ENCODE measurements at regions of chr21 and their contacts with region 1.

Region 1: DNA sequence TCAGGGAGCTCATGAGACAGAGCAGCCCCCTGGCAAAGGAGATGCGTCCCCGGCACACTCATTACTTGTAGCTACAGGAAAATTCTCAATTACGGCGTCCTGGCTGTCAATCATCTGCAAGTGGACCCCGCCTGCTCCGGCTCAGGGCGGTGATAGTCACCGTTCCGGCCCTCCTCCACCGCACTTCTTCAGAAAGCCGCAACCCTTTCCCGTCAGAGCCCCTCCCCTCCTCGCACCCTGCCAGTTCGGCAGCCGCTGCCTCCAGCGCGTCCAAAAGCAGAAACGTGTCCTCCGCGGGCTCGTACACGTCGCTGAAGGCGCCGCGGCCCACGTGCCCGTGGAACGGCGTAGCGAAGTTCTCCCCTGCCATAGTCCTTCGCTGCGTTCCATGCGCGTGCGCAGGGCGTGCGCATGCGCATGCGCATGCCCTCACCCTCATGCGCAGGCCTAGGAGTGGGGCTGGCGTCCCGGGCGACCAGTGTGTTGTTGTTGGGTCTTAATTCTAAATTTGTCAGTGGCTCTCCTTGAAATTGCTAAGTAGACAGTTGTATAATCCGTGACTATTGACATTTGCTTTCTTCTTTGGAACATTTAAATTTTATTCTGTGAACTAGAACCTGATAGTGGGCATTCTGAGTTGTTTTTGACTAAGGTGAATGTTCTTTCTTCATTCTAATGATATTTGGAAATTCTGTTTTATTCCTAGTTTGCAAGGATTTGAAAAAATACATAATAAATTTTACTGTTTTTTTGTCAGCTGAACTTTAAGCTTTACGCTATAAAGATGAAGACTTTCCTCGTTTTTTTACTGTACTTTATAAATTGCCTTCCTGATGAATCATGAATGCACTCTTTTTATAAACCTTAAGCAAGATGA is 107.5 kb downstream of the LTN1 start:
- DNase-seq: peak; percentile 95
- H3K4me3 ChIP-seq: peak overlapping the region; percentile 47 to 57 (median 54)
- H3K27ac ChIP-seq: peak overlapping the region; percentile 83 to 90 (median 88)
- H3K4me1 ChIP-seq: peaks cover 0 to 12% (median 8%) of the 10 kb centered on the region in 4 donors
- H3K27me3 ChIP-seq: no peaks in the 10 kb centered on the region
- CTCF ChIP-seq: no peak
- EP300 ChIP-seq: peak in 1 of 4 donors; percentile 29
- POLR2A ChIP-seq: peak in 1 of 2 donors; percentile 33

Region 2: DNA sequence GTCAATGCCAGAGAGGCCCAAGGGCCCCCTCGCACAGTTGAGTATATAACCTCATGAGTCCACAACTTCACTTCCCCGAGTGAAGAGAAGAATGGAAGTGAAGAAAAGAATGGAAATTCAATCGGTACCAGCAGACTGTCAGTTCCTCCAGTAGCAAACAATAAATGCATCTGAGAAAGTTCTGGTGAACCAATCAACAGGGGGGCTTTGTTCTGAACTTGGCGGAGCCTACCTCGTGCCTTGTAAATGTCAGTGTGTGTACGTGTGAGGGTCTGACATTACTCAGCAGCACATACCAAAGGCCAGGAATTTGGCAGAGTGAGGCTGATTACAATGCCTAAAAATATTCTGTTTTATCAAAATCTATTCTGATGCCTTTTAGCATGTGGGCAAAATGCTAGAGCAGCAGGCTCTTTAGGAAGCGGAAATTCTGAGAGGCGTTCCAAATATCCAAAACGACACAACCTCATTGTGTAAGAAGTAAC is 131.0 kb before region 1 on chr21:
- intact Hi-C with region 1: loop called (anchors 5 kb)
- DNase-seq: peak; percentile 82
- H3K4me3 ChIP-seq: peak overlapping the region in 2 of 4 donors; percentile 13 to 17
- H3K27ac ChIP-seq: peak overlapping the region; percentile 76 to 89 (median 80)
- H3K4me1 ChIP-seq: peaks cover 0 to 53% (median 42%) of the 10 kb centered on the region in 4 donors
- H3K27me3 ChIP-seq: no peaks in the 10 kb centered on the region
- CTCF ChIP-seq: no peak
- EP300 ChIP-seq: peak; percentile 47 to 97 (median 78)
- POLR2A ChIP-seq: no peak

Region 3: DNA sequence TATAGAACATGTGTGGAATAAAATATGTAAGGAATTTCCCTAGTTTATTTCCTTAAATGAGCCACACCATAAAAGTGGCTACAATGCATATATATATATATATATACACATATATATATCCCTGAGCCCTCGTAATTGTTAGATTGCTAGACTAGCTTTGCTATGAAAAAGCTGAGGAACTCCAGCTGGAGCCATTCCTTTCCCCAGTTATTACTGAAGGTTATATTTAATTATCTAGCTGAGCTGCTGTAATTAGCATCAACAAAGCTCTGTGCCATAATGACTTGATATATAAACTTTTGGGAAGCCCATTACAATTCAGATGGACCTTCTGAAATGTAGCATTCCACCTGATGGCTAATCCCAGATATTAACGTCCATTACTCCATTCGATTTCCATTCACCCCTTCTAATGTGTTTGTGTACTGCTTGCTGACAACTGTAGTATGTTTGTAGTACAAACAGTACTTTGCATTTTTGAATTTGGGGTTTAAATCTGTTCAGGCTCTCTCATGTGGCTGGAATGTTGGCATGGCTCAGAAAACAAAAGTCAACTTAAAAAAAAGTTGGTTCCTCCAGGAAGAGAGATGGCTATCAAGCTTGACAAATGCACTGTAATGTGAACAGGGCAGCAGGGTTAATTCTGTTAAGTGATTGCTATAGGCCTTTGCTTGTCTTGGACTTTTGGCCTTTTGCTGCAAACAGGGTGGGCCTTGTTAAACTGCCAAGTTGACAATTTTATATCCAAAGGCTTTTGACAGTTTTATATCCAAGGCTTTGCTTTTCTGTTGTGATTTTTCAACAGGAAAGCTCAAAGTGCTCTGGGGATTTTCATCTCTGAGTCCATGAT is 62.5 kb before region 1 on chr21:
- intact Hi-C with region 1: loop called (anchors 5 kb)
- DNase-seq: no peak
- H3K4me3 ChIP-seq: no peak overlapping the region
- H3K27ac ChIP-seq: peak overlapping the region; percentile 17 to 81 (median 66)
- H3K4me1 ChIP-seq: peaks cover 0 to 31% (median 25%) of the 10 kb centered on the region in 4 donors
- H3K27me3 ChIP-seq: no peaks in the 10 kb centered on the region
- CTCF ChIP-seq: no peak
- EP300 ChIP-seq: no peak
- POLR2A ChIP-seq: no peak

Region 4: GRCh38 chr21:28943631-28944030 is 58.4 kb after region 1 on chr21:
- intact Hi-C with region 1: loop called (anchors 10 kb)
- DNase-seq: no peak
- H3K4me3 ChIP-seq: no peak overlapping the region
- H3K27ac ChIP-seq: no peak overlapping the region
- H3K4me1 ChIP-seq: peaks cover 0 to 5% (median 0%) of the 10 kb centered on the region in 4 donors
- H3K27me3 ChIP-seq: no peaks in the 10 kb centered on the region
- CTCF ChIP-seq: no peak
- EP300 ChIP-seq: no peak
- POLR2A ChIP-seq: no peak

Region 5: GRCh38 chr21:28975397-28975796 is 90.2 kb after region 1 on chr21:
- intact Hi-C with region 1: no loop called
- DNase-seq: no peak
- H3K4me3 ChIP-seq: no peak overlapping the region
- H3K27ac ChIP-seq: no peak overlapping the region
- H3K4me1 ChIP-seq: no peaks in the 10 kb centered on the region
- H3K27me3 ChIP-seq: no peaks in the 10 kb centered on the region
- CTCF ChIP-seq: no peak
- EP300 ChIP-seq: no peak
- POLR2A ChIP-seq: no peak

Region 6: GRCh38 chr21:28992526-28993292 is 107.5 kb after region 1 on chr21 and contains the start of gene LTN1:
- intact Hi-C with region 1: loop called (anchors 10 kb)
- DNase-seq: peak; percentile 100
- H3K4me3 ChIP-seq: peak within 1 kb of the TSS; percentile 82 to 95 (median 90)
- H3K27ac ChIP-seq: peak within 1 kb of the TSS; percentile 88 to 92 (median 91)
- H3K4me1 ChIP-seq: peaks cover 0 to 24% (median 17%) of the 10 kb centered on the region in 4 donors
- H3K27me3 ChIP-seq: no peaks in the 10 kb centered on the region
- CTCF ChIP-seq: no peak
- EP300 ChIP-seq: no peak
- POLR2A ChIP-seq: peak; percentile 33 to 34
- total RNA-seq, gene LTN1: 19.4 to 31.0 (median 24.5) TPM

Region 7: DNA sequence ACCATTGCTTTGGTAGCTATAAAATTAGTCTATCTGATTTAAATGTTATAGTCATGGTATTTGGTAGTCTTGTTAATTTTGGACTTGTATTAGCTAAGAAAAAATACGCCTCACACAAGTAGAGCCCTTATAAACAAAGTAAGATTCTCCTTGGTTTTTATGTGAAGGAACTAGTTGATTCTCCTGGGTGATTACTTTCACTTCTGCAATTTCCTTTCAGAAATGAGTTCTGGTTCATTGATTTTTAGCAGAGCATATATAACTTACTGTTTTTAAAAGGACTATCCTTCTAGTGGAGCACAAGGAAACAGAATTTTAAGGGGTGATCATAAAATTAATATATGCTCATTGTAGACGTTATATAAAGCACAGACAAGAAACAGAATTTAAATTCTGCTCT is 533.6 kb after region 1 on chr21:
- intact Hi-C with region 1: no loop called
- DNase-seq: no peak
- H3K4me3 ChIP-seq: no peak overlapping the region
- H3K27ac ChIP-seq: no peak overlapping the region
- H3K4me1 ChIP-seq: no peaks in the 10 kb centered on the region
- H3K27me3 ChIP-seq: no peaks in the 10 kb centered on the region
- CTCF ChIP-seq: no peak
- EP300 ChIP-seq: no peak
- POLR2A ChIP-seq: no peak

Measured in sigmoid colon (tissue), 7 donors.